ENCODE measurements at regions of chr10 and their contacts with region 1.

Region 1: DNA sequence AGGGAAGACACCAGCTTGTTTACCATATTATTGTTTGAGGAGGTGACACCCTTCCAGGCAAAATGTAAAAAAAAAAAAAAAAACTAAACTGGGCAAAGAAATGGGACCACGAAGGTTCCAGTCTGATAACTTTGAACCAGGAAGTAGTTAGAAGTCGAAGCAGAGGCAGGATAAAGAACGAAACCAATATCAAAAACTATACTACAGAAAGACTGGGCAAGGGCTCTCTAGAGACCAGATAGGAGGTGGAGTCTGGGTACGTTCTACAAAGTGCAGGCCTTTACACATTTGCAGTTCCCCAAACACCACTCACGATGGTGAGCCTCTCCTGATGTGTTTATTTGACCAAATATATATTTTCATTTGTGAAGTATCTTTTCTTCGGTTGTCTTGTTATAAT is 125.7 kb upstream of the CDK1 start:
- DNase-seq: no peak
- ATAC-seq: no peak
- H3K4me3 ChIP-seq: no peak overlapping the region
- H3K27ac ChIP-seq: no peak overlapping the region
- H3K4me1 ChIP-seq: no peaks in the 10 kb centered on the region
- H3K27me3 ChIP-seq: peaks cover 0 to 4% (median 0%) of the 10 kb centered on the region in 7 donors
- CTCF ChIP-seq: no peak

Region 2: DNA sequence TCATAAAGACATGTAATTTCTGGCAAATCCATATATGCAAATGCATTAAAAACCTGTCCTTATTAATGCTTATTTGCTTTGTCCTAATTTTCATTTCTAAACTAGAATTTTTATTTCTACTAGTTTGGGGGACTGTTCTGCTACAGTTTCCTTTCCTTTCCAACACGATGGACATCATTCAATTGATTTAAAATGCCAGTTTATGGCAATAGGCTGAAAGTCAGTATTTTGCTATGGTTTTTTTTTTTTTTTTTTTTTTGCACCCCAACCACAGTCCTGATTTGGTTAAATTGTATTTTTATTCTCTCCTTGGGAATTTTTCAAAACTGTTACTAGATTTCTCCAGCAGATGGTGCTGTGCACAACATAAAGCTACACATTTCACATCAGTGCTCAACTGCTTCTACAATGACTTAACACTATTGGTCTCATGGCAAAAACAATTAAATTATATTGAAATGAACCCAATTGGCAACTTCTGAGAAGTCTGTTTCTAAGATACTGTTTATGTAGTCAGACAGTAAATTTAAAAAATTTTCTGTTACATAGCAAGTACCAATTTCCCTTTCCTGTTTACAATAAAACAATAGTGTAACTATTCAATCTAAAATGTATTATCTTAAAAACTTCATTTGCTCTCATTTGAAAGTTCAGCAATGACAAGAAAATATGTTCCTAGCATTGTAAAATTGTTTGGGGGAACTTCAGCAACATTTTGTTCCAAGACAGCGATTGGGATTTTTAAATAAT is 552.5 kb before region 1 on chr10:
- intact Hi-C with region 1: loop called in 7 of 10 experiments (anchors 5 to 10 kb)
- DNase-seq: peak in 1 of 2 donors; percentile 9
- ATAC-seq: peak in 7 of 8 donors; percentile 25 to 75 (median 56)
- H3K4me3 ChIP-seq: no peak overlapping the region
- H3K27ac ChIP-seq: no peak overlapping the region
- H3K4me1 ChIP-seq: peaks cover 0 to 4% (median 0%) of the 10 kb centered on the region in 9 donors
- H3K27me3 ChIP-seq: no peaks in the 10 kb centered on the region
- CTCF ChIP-seq: peak in 8 of 9 donors; percentile 36 to 72 (median 64)

Region 3: DNA sequence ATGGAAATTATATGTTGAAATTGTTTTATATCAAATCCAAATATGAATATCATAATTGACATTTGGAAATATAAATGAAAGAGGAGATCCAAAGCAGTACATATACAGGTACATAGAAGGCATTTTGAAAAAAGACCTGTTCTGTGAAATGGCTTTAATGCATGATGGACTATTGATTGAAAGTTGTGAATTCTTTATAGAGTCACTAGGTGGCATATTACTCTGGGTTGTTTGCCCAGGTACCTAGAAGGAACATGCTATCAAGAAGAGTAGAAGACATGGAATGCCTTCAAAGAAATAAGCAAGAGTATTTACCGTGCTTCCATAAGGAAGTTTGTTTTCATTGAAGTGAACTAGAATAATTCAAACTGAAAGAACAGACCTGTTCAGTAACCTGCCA is 102.9 kb before region 1 on chr10:
- intact Hi-C with region 1: loop called in 4 of 10 experiments (anchors 10 kb)
- DNase-seq: no peak
- ATAC-seq: no peak
- H3K4me3 ChIP-seq: no peak overlapping the region
- H3K27ac ChIP-seq: no peak overlapping the region
- H3K4me1 ChIP-seq: no peaks in the 10 kb centered on the region
- H3K27me3 ChIP-seq: no peaks in the 10 kb centered on the region
- CTCF ChIP-seq: peak in 7 of 9 donors; percentile 9 to 51 (median 25)

Measured in heart right ventricle (tissue), 16 donors.